Natural killer cell (primary cell): ENCODE measurements at regions of chr5 and their contacts with region 1.

Region 1: GRCh38 chr5:43556857-43557542 is at the start of gene PAIP1:
- DNase-seq: peak; percentile 82 to 91
- ATAC-seq: peak; percentile 86 to 92 (median 87)
- H3K4me3 ChIP-seq: peak within 1 kb of the TSS; percentile 86
- H3K4me3 Mint-ChIP-seq: peak within 1 kb of the TSS; percentile 92
- H3K27ac ChIP-seq: peak within 1 kb of the TSS; percentile 87
- H3K27ac Mint-ChIP-seq: peak within 1 kb of the TSS; percentile 92 to 93
- H3K4me1 ChIP-seq: peaks cover 13% of the 10 kb centered on the region
- H3K4me1 Mint-ChIP-seq: peaks cover 6 to 13% of the 10 kb centered on the region in 2 donors
- H3K27me3 ChIP-seq: no peaks in the 10 kb centered on the region
- H3K27me3 Mint-ChIP-seq: no peaks in the 10 kb centered on the region
- CTCF ChIP-seq: peak; percentile 77
- total RNA-seq, gene PAIP1: 22.4 to 35.1 (median 29.2) TPM

Region 2: GRCh38 chr5:43514816-43515677 is 42.0 kb before region 1 on chr5 and contains the start of gene C5orf34:
- intact Hi-C with region 1: loop called (anchors 2 kb)
- DNase-seq: peak; percentile 90 to 97
- ATAC-seq: peak; percentile 94 to 98 (median 95)
- H3K4me3 ChIP-seq: peak within 1 kb of the TSS; percentile 83
- H3K4me3 Mint-ChIP-seq: peak within 1 kb of the TSS; percentile 92
- H3K27ac ChIP-seq: peak within 1 kb of the TSS; percentile 91
- H3K27ac Mint-ChIP-seq: peak within 1 kb of the TSS; percentile 91 to 93
- H3K4me1 ChIP-seq: peaks cover 4% of the 10 kb centered on the region
- H3K4me1 Mint-ChIP-seq: peaks cover 24 to 31% of the 10 kb centered on the region in 2 donors
- H3K27me3 ChIP-seq: no peaks in the 10 kb centered on the region
- H3K27me3 Mint-ChIP-seq: peaks cover 0 to 5% of the 10 kb centered on the region in 2 donors
- CTCF ChIP-seq: no peak
- total RNA-seq, gene C5orf34: 1.1 to 1.8 (median 1.3) TPM

Region 3: GRCh38 chr5:43602461-43603343 is 45.7 kb after region 1 on chr5 and contains the start of gene NNT:
- intact Hi-C with region 1: loop called (anchors 1 kb)
- DNase-seq: peak; percentile 76 to 86
- ATAC-seq: peak; percentile 73 to 87 (median 80)
- H3K4me3 ChIP-seq: peak within 1 kb of the TSS; percentile 91
- H3K4me3 Mint-ChIP-seq: peak within 1 kb of the TSS; percentile 92
- H3K27ac ChIP-seq: peak within 1 kb of the TSS; percentile 81
- H3K27ac Mint-ChIP-seq: peak within 1 kb of the TSS; percentile 94 to 98
- H3K4me1 ChIP-seq: peaks cover 23% of the 10 kb centered on the region
- H3K4me1 Mint-ChIP-seq: peaks cover 50 to 56% of the 10 kb centered on the region in 2 donors
- H3K27me3 ChIP-seq: no peaks in the 10 kb centered on the region
- H3K27me3 Mint-ChIP-seq: no peaks in the 10 kb centered on the region
- CTCF ChIP-seq: no peak
- total RNA-seq, gene NNT: 57.0 to 66.1 (median 64.6) TPM